Left cardiac atrium (tissue), 4 donors: ENCODE measurements at regions of chr19 and their contacts with region 1.

Region 1: GRCh38 chr19:16088351-16089009 is 12.2 kb downstream of the TPM4 start:
- DNase-seq: no peak
- ATAC-seq: peak in 1 of 2 donors; percentile 15

Region 2: GRCh38 chr19:15714638-15715037 is 373.8 kb before region 1 on chr19:
- intact Hi-C with region 1: no loop called
- DNase-seq: no peak
- ATAC-seq: no peak

Region 3: GRCh38 chr19:15962319-15962718 is 126.2 kb before region 1 on chr19:
- intact Hi-C with region 1: no loop called
- DNase-seq: no peak
- ATAC-seq: no peak

Region 4: DNA sequence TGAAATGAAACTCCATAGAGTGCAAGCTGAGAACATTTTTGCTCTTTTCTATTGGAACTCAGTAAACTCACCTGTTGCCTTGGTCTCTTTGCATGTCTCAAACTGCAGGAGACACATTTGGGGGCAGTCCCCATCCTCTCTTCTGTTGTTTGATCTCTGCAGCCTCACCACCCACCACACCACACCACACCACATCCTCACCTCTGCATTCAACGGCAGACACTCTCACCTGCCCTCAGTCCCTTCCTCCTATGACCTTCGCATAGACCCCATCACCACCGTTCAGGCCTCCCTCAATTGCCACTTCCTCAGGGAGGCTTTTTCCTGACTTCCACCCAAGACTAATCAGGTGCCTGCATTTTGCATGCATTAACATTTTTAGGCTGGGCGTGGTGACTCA is 26.5 kb before region 1 on chr19:
- intact Hi-C with region 1: no loop called
- DNase-seq: no peak
- ATAC-seq: no peak

Region 5: DNA sequence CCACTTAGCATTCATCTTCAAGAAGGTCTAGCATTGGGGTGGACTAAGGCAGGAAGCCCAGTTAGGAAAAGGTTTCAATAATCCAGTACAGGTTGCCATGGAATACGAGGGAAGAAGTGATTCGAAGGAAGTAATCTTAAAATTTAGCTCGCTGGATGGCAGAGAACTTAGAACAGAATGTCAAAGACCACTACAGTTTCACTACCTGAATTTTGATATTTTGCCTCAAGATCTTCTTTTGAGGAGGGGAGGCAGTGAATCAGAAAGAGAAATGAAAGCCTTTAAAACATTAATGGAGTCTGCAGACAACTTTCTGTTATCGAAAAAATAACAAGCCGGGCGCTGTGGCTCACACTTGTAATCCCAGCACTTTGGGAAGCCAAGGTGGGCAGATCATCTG is 16.2 kb after region 1 on chr19:
- intact Hi-C with region 1: loop called in 1 of 2 experiments (anchors 2 kb)
- DNase-seq: no peak
- ATAC-seq: no peak